Activated CD4-positive, alpha-beta T cell treated with anti-CD3 and anti-CD28 coated beads, Interleukin-2, amount 10 ng/mL, durations not matched to agents 24 days and 14 days (primary cell): ENCODE measurements at regions of chrX and their contacts with region 1.

Region 1: GRCh38 chrX:17689971-17690409 is 47.3 kb upstream of the SCML1 start:
- DNase-seq: peak; percentile 81
- H3K4me3 Mint-ChIP-seq: no peak overlapping the region
- H3K27ac Mint-ChIP-seq: no peak overlapping the region
- H3K4me1 Mint-ChIP-seq: no peaks in the 10 kb centered on the region
- H3K27me3 Mint-ChIP-seq: no peaks in the 10 kb centered on the region

Region 2: GRCh38 chrX:17120816-17121215 is 569.2 kb before region 1 on chrX:
- intact Hi-C with region 1: loop called (anchors 5 kb)
- DNase-seq: no peak
- H3K4me3 Mint-ChIP-seq: no peak overlapping the region
- H3K27ac Mint-ChIP-seq: no peak overlapping the region
- H3K4me1 Mint-ChIP-seq: no peaks in the 10 kb centered on the region
- H3K27me3 Mint-ChIP-seq: no peaks in the 10 kb centered on the region

Region 3: GRCh38 chrX:17535229-17535628 is 154.8 kb before region 1 on chrX:
- intact Hi-C with region 1: loop called (anchors 1 kb)
- DNase-seq: peak; percentile 77
- H3K4me3 Mint-ChIP-seq: no peak overlapping the region
- H3K27ac Mint-ChIP-seq: no peak overlapping the region
- H3K4me1 Mint-ChIP-seq: peaks cover 7% of the 10 kb centered on the region
- H3K27me3 Mint-ChIP-seq: peaks cover 2% of the 10 kb centered on the region

Region 4: DNA sequence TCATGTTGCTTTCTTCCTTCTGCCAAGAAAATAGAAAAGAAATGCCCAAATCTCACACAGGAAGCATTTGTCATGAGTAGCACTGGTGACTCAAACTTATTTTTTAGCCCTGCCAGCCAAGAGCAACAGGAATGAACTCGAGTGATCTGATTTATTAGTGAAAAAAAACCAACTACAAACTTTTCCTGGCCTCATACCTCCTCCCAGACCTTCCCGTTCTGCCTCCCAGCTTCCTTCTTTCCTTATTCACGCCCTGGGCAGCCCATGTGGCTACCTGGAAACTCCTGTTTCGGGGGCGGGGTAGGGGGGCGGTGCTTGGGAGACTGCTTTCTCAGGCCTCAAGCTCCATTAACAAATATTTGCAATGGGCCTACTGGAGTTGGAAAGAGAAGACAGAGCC is 136.5 kb before region 1 on chrX:
- intact Hi-C with region 1: no loop called
- DNase-seq: no peak
- H3K4me3 Mint-ChIP-seq: no peak overlapping the region
- H3K27ac Mint-ChIP-seq: no peak overlapping the region
- H3K4me1 Mint-ChIP-seq: peaks cover 3% of the 10 kb centered on the region
- H3K27me3 Mint-ChIP-seq: no peaks in the 10 kb centered on the region